A549 (cell line): ENCODE measurements at regions of chr5 and their contacts with region 1.

Region 1: GRCh38 chr5:119070828-119071572 is at the start of gene DMXL1:
- DNase-seq: peak; percentile 81 to 99
- ATAC-seq: peak; percentile 91 to 95
- H3K4me3 ChIP-seq: peak within 1 kb of the TSS; percentile 74
- H3K27ac ChIP-seq: peak within 1 kb of the TSS; percentile 83 to 92
- H3K4me1 ChIP-seq: peaks cover 19% of the 10 kb centered on the region
- CTCF ChIP-seq: no peak
- EP300 ChIP-seq: no peak
- POLR2A ChIP-seq: peak; percentile 57
- RAD21 ChIP-seq: no peak
- polyA plus RNA-seq, gene DMXL1: 23.6 and 28.8 TPM in 2 replicates

Region 2: DNA sequence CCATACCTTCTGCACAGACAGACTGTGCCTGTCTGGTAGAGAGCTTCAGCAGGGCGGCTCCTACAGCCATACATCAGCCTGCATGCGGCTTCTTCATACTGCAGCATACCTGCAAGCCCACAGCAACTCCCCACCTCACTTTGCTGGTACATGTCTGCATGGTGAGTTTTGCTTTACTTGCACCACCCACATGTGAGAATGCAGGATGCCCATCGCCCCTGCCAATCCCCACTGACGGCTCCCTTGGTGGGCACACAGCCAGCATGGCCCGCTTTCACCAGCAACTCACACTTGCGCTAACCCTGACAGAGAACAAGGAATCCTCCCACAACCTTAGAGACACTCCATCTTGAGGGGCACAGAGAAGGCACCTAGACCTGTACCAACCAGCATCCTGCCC is 197.6 kb before region 1 on chr5:
- CTCF ChIA-PET with region 1: no interaction called
- POLR2A ChIA-PET with region 1: no interaction called
- DNase-seq: no peak
- ATAC-seq: no peak
- H3K4me3 ChIP-seq: no peak overlapping the region
- H3K27ac ChIP-seq: no peak overlapping the region
- H3K4me1 ChIP-seq: no peaks in the 10 kb centered on the region
- CTCF ChIP-seq: no peak
- EP300 ChIP-seq: no peak
- POLR2A ChIP-seq: no peak
- RAD21 ChIP-seq: no peak

Region 3: DNA sequence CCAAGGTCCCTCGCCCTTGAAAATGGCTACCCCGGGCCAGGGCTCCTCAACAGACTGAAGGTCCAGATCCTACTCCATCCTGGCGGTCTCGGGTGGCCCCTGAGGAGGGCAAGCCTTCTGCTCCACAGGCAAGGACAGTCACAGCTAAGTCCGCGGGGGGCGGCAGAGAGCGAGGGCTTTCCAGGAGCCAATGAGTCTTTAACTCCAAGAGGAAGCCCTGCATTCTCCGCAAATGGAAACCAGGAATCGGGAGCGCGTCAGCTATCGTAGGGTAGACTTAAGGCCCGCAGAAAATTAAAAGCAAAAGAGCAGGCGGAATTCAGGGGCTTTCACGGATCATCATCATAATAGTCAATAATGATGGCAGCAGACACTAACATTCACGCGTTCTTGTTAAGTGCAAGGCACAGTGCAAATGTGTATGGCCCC is 197.0 kb after region 1 on chr5:
- CTCF ChIA-PET with region 1: interaction called, 3 read pairs
- POLR2A ChIA-PET with region 1: interaction called, 16 read pairs
- DNase-seq: peak; percentile 46 to 84
- ATAC-seq: peak; percentile 77 to 79
- H3K4me3 ChIP-seq: peak overlapping the region; percentile 69
- H3K27ac ChIP-seq: peak overlapping the region; percentile 86 to 93
- H3K4me1 ChIP-seq: peaks cover 34% of the 10 kb centered on the region
- CTCF ChIP-seq: no peak
- EP300 ChIP-seq: no peak
- POLR2A ChIP-seq: no peak
- RAD21 ChIP-seq: no peak

Region 4: GRCh38 chr5:119302916-119303897 is 232.2 kb after region 1 on chr5:
- CTCF ChIA-PET with region 1: interaction called, 4 read pairs
- POLR2A ChIA-PET with region 1: interaction called, 14 read pairs
- DNase-seq: peak; percentile 65 to 93
- ATAC-seq: peak; percentile 94 to 96
- H3K4me3 ChIP-seq: peak overlapping the region; percentile 14
- H3K27ac ChIP-seq: peak overlapping the region; percentile 82 to 89
- H3K4me1 ChIP-seq: peaks cover 78% of the 10 kb centered on the region
- CTCF ChIP-seq: no peak
- EP300 ChIP-seq: peak; percentile 79 to 90; a peak in 4 of 5 replicates
- POLR2A ChIP-seq: no peak
- RAD21 ChIP-seq: peak; percentile 40 to 50

Region 5: GRCh38 chr5:119322948-119323537 is 252.0 kb after region 1 on chr5:
- CTCF ChIA-PET with region 1: no interaction called
- POLR2A ChIA-PET with region 1: interaction called, 12 read pairs
- DNase-seq: peak in 1 of 2 experiments; percentile 45
- ATAC-seq: peak in 1 of 2 experiments; percentile 11; a peak in 2 of 6 replicates
- H3K4me3 ChIP-seq: no peak overlapping the region
- H3K27ac ChIP-seq: peak overlapping the region; percentile 86 to 93
- H3K4me1 ChIP-seq: peaks cover 60% of the 10 kb centered on the region
- CTCF ChIP-seq: no peak
- EP300 ChIP-seq: no peak
- POLR2A ChIP-seq: no peak
- RAD21 ChIP-seq: no peak